Activated T-helper 2 cell treated with anti-CD3 and anti-CD28 coated beads, Interferon-gamma antibody, Interleukin-2, Interleukin-4, amounts not matched to agents 10 μg/mL and 5 μg/mL and 100 μg/mL, durations not matched to agents 14 hours and 24 hours and 36 hours (primary cell): ENCODE measurements at regions of chr12 and their contacts with region 1.

Region 1: DNA sequence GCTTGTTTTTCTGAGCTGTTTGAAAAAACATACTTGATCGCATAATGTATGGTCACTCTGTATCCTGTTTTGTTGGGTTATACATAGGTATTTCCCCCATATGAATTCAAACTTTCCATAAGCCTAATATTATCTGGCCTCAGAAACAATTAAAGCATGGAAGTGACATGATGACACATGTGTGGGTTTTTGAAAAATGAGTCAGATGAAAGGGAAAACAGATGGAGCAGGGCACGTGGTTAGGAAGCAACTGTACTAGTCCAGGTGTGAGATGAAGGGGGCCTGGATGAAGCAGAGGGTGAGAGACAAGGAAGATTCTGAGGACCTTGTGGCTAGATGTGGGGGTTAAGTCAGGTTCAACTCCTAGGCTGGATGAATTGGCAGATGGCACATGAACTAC is 92.7 kb upstream of the DNM1L start:
- DNase-seq: no peak
- H3K4me3 Mint-ChIP-seq: peak overlapping the region; percentile 0
- H3K27ac Mint-ChIP-seq: peak overlapping the region; percentile 82
- H3K4me1 Mint-ChIP-seq: peaks cover 70% of the 10 kb centered on the region
- H3K27me3 Mint-ChIP-seq: no peaks in the 10 kb centered on the region

Region 2: GRCh38 chr12:32558903-32559302 is 27.5 kb before region 1 on chr12:
- intact Hi-C with region 1: loop called (anchors 1 kb)
- DNase-seq: no peak
- H3K4me3 Mint-ChIP-seq: no peak overlapping the region
- H3K27ac Mint-ChIP-seq: no peak overlapping the region
- H3K4me1 Mint-ChIP-seq: peaks cover 31% of the 10 kb centered on the region
- H3K27me3 Mint-ChIP-seq: no peaks in the 10 kb centered on the region